ENCODE measurements at regions of chr12 and their contacts with region 1.

Region 1: GRCh38 chr12:53220801-53221202 is 11.2 kb downstream of the RARG start:
- DNase-seq: peak; percentile 57 to 85 (median 68)
- ATAC-seq: peak; percentile 59 to 63
- H3K4me3 Mint-ChIP-seq: peak overlapping the region; percentile 91 to 100 (median 98)
- H3K27ac Mint-ChIP-seq: peak overlapping the region; percentile 91 to 98 (median 94)
- H3K4me1 Mint-ChIP-seq: peaks cover 62 to 80% (median 77%) of the 10 kb centered on the region in 4 donors
- H3K27me3 Mint-ChIP-seq: no peaks in the 10 kb centered on the region

Region 2: DNA sequence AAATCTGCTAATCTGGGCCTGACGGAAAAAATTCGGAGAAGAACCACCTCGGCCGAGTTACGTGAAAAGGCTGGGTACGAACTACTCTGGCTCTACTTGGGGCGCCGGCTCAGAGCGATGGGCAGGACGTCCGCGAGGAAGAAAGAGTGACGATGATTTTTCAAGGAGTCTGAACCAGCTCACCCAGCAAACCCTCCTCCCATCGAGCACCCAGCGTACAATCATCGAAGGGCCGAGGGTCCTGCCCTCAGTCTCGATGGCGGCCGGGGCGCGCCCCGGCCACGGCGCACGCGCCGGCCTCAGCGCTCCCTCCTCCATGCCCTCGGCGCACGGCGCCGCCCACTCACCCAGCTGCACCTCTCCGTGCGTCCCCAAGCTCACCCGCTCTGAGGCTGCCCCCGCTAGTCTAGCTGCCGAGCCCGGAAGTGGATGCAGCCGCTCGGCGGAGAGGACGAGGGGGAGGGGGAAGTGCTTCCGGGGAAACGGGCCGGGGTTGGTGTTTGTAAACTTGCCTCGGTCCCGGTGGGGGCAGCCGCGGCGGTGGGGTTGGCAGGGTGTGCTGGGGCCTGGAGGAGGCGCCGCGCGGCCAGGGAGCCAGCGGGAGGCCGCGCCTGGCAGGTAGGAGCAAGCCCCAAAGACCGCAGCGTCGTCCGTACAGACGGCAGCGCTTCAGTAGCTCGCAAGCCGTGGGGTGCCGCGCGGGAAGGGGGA is 40.4 kb before region 1 on chr12 and contains the starts of genes CSAD and ZNF740:
- POLR2A ChIA-PET with region 1: interaction called, 39 read pairs
- DNase-seq: peak; percentile 94 to 99 (median 97)
- ATAC-seq: peak; percentile 92 to 96
- H3K4me3 Mint-ChIP-seq: peak within 1 kb of the TSS; percentile 90 to 97 (median 92)
- H3K27ac Mint-ChIP-seq: peak within 1 kb of the TSS; percentile 94 to 99 (median 98)
- H3K4me1 Mint-ChIP-seq: peaks cover 29 to 62% (median 54%) of the 10 kb centered on the region in 4 donors
- H3K27me3 Mint-ChIP-seq: no peaks in the 10 kb centered on the region
- polyA plus RNA-seq, gene CSAD: 1.1 to 1.3 (median 1.2) TPM
- polyA plus RNA-seq, gene ZNF740: 2.8 to 3.5 (median 3.1) TPM

Region 3: GRCh38 chr12:53205747-53206419 is 14.9 kb before region 1 on chr12:
- POLR2A ChIA-PET with region 1: interaction called, 80 read pairs
- DNase-seq: peak in 2 of 10 donors; percentile 44 to 55
- ATAC-seq: peak; percentile 26 to 58
- H3K4me3 Mint-ChIP-seq: peak overlapping the region; percentile 77 to 95 (median 90)
- H3K27ac Mint-ChIP-seq: peak overlapping the region; percentile 83 to 98 (median 92)
- H3K4me1 Mint-ChIP-seq: peaks cover 39 to 92% (median 74%) of the 10 kb centered on the region in 4 donors
- H3K27me3 Mint-ChIP-seq: no peaks in the 10 kb centered on the region

Region 4: GRCh38 chr12:53241623-53242412 is 21.0 kb after region 1 on chr12:
- POLR2A ChIA-PET with region 1: interaction called, 53 read pairs
- DNase-seq: no peak
- ATAC-seq: no peak
- H3K4me3 Mint-ChIP-seq: no peak overlapping the region
- H3K27ac Mint-ChIP-seq: peak overlapping the region in 3 of 10 donors; percentile 31 to 41 (median 37)
- H3K4me1 Mint-ChIP-seq: peaks cover 10 to 19% (median 14%) of the 10 kb centered on the region in 4 donors
- H3K27me3 Mint-ChIP-seq: peaks cover 0 to 6% (median 4%) of the 10 kb centered on the region in 5 donors

Region 5: DNA sequence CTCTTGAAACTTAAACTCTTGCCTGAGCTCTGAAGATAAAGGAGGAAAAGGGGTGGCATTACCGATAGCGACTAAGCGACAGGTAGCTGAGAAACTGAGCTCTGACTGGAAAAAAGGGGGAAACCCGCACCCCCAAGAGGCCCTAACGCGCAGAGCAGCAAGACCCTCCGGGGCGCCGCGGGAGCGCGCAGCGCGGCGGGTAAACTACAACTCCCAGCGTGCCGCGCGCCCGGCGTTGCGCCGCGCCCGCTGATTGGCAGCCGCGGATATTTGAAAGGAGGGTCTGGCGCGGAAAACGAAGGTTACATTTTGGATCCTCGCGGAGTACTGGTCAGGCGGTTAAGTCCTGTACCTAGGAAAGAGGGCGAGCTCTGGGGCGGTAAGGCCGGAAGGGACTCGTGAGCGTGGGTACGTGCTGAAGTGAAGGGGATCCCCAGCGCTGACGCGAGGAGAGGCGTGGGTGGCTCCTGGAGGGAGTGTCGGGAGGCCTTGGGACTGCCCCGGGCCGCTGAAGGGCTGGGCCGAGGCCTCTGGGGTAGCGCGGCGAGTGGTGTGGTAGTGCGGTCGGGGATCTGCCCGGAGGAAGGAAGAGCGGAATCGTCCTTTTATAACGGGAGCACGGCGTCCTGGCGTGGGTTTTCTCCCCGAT is 47.3 kb after region 1 on chr12 and contains the start of gene ESPL1:
- POLR2A ChIA-PET with region 1: interaction called, 53 read pairs
- DNase-seq: peak; percentile 77 to 91 (median 85)
- ATAC-seq: peak; percentile 90 to 95
- H3K4me3 Mint-ChIP-seq: peak within 1 kb of the TSS; percentile 92 to 100 (median 96)
- H3K27ac Mint-ChIP-seq: peak within 1 kb of the TSS; percentile 88 to 96 (median 94)
- H3K4me1 Mint-ChIP-seq: peaks cover 12 to 22% (median 20%) of the 10 kb centered on the region in 4 donors
- H3K27me3 Mint-ChIP-seq: peaks cover 0 to 4% (median 0%) of the 10 kb centered on the region in 5 donors
- polyA plus RNA-seq, gene ESPL1: not detected

Region 6: DNA sequence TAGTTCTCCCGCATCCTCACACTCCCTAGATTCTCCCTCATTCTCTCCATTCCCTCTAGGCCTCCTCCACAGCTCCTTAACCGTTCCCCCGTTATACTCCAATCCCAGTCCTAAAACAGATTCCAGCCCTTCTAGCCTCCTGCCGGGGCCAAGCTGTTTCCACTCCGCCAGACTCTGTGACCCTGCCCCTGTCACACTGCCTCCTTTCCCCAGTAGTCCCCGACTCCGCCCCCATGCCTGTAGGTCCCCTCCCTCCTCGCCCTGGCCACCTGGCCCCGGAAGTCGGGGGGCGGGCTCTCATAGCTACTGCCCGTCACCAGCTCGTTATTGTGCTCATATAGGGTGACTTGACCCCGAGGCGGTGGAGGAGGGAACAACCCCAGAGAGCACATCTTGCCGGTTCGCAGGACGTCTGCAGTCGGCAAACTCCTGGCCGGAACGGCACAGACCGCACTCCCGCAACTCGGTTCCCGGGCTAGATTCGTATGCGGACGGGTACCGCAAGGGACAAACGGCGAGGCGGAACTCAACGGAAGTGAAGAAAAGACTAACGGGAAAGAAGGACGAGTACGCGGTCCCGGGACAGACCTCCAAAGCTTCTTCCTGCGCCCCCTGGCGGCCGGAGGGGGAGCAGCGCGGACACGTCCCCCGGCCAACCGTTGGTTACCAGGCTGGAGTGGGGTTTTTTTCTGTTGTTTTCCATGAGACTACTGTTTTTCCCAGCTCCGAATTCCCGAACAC is 100.4 kb after region 1 on chr12 and contains the start of gene AAAS:
- POLR2A ChIA-PET with region 1: interaction called, 15 read pairs
- DNase-seq: peak; percentile 87 to 99 (median 92)
- ATAC-seq: peak; percentile 77 to 78
- H3K4me3 Mint-ChIP-seq: peak within 1 kb of the TSS; percentile 90 to 100 (median 98)
- H3K27ac Mint-ChIP-seq: peak within 1 kb of the TSS; percentile 96 to 99 (median 97)
- H3K4me1 Mint-ChIP-seq: peaks cover 28 to 51% (median 45%) of the 10 kb centered on the region in 4 donors
- H3K27me3 Mint-ChIP-seq: no peaks in the 10 kb centered on the region
- polyA plus RNA-seq, gene AAAS: 34.1 to 57.2 (median 39.3) TPM

Measured in naive thymus-derived CD8-positive, alpha-beta T cell (primary cell).